ENCODE measurements at regions of chr2 and their contacts with region 1.

Region 1: DNA sequence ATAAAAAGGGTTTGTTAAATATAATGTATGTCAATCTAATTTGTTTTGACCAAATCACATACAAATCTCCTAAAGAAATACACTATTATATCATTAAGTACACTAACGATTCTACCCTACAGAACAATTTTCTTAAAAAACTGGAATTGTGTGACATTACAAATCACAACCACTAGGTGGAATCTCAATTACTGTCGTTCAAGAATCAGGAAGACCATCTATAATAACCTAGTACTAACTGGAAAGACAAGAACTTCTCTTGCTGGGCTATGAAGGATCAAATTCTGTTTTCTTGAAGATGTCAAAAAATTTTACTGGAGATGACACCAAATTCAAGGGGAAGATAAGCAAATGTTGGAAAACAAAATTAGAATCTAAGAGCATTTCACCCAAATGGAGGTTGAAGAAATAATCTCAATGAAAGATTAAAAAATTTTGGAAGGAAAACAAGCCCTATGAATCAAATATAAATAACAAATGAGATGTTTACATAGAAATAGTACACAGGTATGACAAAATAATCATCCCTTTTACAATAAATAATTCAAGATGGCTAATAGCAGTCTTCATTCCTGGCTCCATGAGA is 110.9 kb downstream of the STK39 start:
- DNase-seq: no peak
- ATAC-seq: no peak
- H3K4me3 ChIP-seq: no peak overlapping the region
- H3K27ac ChIP-seq: peak overlapping the region in 4 of 12 donors; percentile 1 to 44 (median 23)
- H3K4me1 ChIP-seq: peaks cover 0 to 39% (median 14%) of the 10 kb centered on the region in 12 donors
- H3K27me3 ChIP-seq: no peaks in the 10 kb centered on the region
- CTCF ChIP-seq: peak; percentile 37 to 69 (median 58)
- POLR2A ChIP-seq: no peak

Region 2: DNA sequence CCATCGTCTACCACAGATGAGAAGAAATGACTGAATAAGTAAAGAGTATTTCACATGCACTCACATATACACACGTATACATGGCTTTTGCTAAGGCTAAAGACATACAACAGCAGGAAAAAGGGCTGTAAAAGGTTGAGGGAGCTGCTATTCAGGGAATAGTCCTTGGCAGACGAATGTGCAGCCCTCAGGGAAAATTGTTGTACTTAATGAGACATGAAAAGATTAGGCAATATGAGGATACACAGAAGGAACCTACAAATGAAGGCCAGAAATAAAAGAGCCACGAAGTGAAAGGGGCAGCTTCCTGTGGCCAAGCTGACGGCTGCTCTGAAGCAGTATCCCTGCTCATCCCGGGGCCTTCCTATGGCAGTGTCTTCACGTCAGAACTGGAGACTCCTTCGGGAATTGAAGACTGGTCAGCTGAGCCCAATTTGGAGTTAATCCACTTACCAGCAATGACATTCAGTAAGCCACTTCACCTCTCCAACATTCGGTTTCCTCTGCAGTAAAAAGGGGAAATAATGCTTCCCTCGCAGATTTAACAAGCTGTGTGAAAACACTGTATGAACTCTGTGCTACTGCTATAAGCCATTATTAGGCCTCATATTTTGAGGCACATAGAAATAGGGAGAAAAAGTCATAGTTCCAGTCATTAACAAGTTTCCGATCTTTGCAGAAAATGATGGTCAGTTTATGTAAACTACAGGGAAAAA is 110.8 kb before region 1 on chr2:
- intact Hi-C with region 1: no loop called
- DNase-seq: no peak
- ATAC-seq: peak in 1 of 4 donors; percentile 41
- H3K4me3 ChIP-seq: no peak overlapping the region
- H3K27ac ChIP-seq: no peak overlapping the region
- H3K4me1 ChIP-seq: peaks cover 0 to 13% (median 0%) of the 10 kb centered on the region in 12 donors
- H3K27me3 ChIP-seq: no peaks in the 10 kb centered on the region
- CTCF ChIP-seq: no peak
- POLR2A ChIP-seq: no peak

Region 3: DNA sequence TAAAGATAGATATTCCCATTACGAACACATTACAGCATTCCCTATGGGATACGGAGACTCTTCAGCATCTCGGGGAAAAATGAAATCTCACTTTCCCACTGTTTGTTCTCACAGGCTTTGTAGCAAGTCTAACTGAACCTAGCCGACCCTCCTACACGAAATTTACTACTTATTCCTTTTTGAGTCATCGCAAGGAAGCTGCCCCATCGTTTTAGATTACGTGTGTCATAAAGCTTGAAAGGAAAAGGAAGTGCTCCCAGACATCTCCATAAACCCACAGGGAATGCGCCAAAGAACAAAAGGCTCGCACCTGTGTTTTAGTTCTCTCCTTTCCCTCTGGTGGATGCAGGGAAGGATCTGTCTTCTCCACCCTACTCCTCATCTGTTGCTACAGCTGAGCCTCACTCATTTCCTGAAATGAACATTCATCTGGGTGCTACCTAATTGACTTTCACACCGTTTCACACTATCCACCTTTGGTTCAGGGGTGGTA is 187.1 kb after region 1 on chr2:
- intact Hi-C with region 1: loop called in 3 of 10 experiments (anchors 10 kb)
- DNase-seq: no peak
- ATAC-seq: no peak
- H3K4me3 ChIP-seq: no peak overlapping the region
- H3K27ac ChIP-seq: no peak overlapping the region
- H3K4me1 ChIP-seq: no peaks in the 10 kb centered on the region
- H3K27me3 ChIP-seq: peaks cover 0 to 4% (median 0%) of the 10 kb centered on the region in 9 donors
- CTCF ChIP-seq: no peak
- POLR2A ChIP-seq: no peak

Region 4: DNA sequence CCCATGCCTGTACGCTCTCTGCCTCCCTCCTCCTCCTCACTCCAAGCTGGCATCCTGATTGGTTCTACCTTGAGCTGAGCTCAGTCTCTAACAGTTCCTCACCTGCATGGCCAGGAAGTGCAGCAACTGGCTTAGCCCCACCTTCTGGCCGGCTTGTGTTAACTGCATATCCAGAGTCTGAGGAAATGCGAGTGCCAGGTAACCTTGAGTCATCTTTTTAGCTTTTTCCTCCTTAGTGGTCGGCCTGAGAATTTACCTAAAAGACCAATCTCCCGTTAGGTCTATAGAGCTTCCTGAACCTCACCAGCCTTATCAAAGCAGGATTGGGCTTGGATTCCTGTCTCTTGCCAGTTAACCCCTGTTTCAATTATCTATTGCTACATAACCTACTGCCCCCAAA is 200.4 kb after region 1 on chr2:
- intact Hi-C with region 1: loop called in 4 of 10 experiments (anchors 10 kb)
- DNase-seq: peak in 1 of 5 donors; percentile 29
- ATAC-seq: peak in 3 of 4 donors; percentile 59 to 76 (median 64)
- H3K4me3 ChIP-seq: no peak overlapping the region
- H3K27ac ChIP-seq: no peak overlapping the region
- H3K4me1 ChIP-seq: no peaks in the 10 kb centered on the region
- H3K27me3 ChIP-seq: peaks cover 0 to 2% (median 0%) of the 10 kb centered on the region in 9 donors
- CTCF ChIP-seq: peak in 10 of 12 donors; percentile 22 to 44 (median 33)
- POLR2A ChIP-seq: no peak

Measured in heart left ventricle (tissue), 16 donors.